Right cardiac atrium (tissue), 5 donors: ENCODE measurements at regions of chr7 and their contacts with region 1.

Region 1: GRCh38 chr7:56079450-56080185 is 13.1 kb downstream of the PHKG1 start:
- DNase-seq: peak; percentile 89 to 95 (median 95)
- ATAC-seq: peak; percentile 86 to 87
- H3K4me3 ChIP-seq: no peak overlapping the region
- H3K27ac ChIP-seq: peak overlapping the region; percentile 98
- H3K4me1 ChIP-seq: peaks cover 8% of the 10 kb centered on the region
- H3K27me3 ChIP-seq: no peaks in the 10 kb centered on the region

Region 2: GRCh38 chr7:55629051-55629677 is 450.5 kb before region 1 on chr7:
- intact Hi-C with region 1: loop called in 1 of 4 experiments (anchors 5 kb)
- DNase-seq: no peak
- ATAC-seq: no peak
- H3K4me3 ChIP-seq: no peak overlapping the region
- H3K27ac ChIP-seq: no peak overlapping the region
- H3K4me1 ChIP-seq: no peaks in the 10 kb centered on the region
- H3K27me3 ChIP-seq: no peaks in the 10 kb centered on the region

Region 3: GRCh38 chr7:56009695-56010094 is 69.9 kb before region 1 on chr7:
- intact Hi-C with region 1: loop called in 3 of 4 experiments (anchors 5 to 10 kb)
- DNase-seq: no peak
- ATAC-seq: peak; percentile 44 to 56
- H3K4me3 ChIP-seq: no peak overlapping the region
- H3K27ac ChIP-seq: no peak overlapping the region
- H3K4me1 ChIP-seq: no peaks in the 10 kb centered on the region
- H3K27me3 ChIP-seq: no peaks in the 10 kb centered on the region